K562 (cell line): ENCODE measurements at regions of chr3 and their contacts with region 1.

Region 1: GRCh38 chr3:47781685-47782445 is at the start of gene SMARCC1:
- DNase-seq: peak; percentile 98 to 100 (median 99)
- ATAC-seq: peak; percentile 90
- H3K4me3 ChIP-seq: peak within 1 kb of the TSS; percentile 69
- H3K27ac ChIP-seq: peak within 1 kb of the TSS; percentile 98
- H3K4me1 ChIP-seq: peaks cover 16 to 23% of the 10 kb centered on the region in 2 experiments
- H3K27me3 ChIP-seq: no peaks in the 10 kb centered on the region
- CTCF ChIP-seq: no peak; a peak in 1 of 6 replicates
- EP300 ChIP-seq: peak; percentile 11; the same call in 1 of the 2 replicates
- POLR2A ChIP-seq: peak; percentile 98
- RAD21 ChIP-seq: no peak
- polyA plus RNA-seq, gene SMARCC1: 20.7 to 40.5 TPM

Region 2: DNA sequence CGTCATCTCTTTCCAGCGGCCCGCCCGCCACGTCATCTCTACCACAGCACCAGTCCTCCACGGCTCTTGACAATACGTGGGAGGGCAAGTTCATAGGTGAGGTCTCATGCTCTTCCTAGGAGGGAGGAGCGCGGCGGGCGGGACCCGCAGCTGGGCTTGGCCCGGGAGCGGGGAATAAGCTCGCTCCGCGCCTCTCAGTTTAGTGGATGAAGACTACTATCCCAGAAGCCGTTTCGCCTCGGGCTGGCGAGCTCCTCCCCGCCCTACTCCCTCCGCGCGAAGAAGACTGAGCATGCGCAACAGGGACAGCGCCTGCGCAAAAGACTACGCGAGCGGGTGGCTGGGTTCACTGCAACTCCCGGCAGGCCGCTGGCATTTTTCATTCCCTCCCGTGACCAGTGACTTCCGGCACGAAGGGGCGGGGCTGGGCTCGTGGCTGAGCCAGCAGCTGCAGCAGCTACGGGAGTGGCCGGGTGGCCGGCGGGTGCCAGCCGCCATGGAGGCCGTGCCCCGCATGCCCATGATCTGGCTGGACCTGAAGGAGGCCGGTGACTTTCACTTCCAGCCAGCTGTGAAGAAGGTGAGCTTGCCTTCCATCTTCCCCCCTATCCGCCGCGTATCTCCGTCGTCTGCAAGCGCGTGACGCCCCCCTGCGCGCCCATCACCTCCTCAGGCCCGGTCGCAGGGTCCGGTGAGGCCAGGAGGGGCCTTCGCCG is 401.1 kb before region 1 on chr3 and contains the start of gene PTPN23:
- CTCF ChIA-PET with region 1: no interaction called
- POLR2A ChIA-PET with region 1: no interaction called
- in situ Hi-C with region 1: no loop called
- intact Hi-C with region 1: loop called (anchors 5 kb)
- DNase-seq: peak; percentile 97 to 100 (median 98)
- ATAC-seq: peak; percentile 87
- H3K4me3 ChIP-seq: peak within 1 kb of the TSS; percentile 88
- H3K27ac ChIP-seq: peak within 1 kb of the TSS; percentile 94
- H3K4me1 ChIP-seq: peaks cover 30 to 32% of the 10 kb centered on the region in 2 experiments
- H3K27me3 ChIP-seq: no peaks in the 10 kb centered on the region
- CTCF ChIP-seq: no peak
- EP300 ChIP-seq: no peak
- POLR2A ChIP-seq: peak; percentile 92
- RAD21 ChIP-seq: no peak
- polyA plus RNA-seq, gene PTPN23: 0.41 to 0.93 TPM

Region 3: GRCh38 chr3:47420511-47421484 is 361.1 kb before region 1 on chr3:
- CTCF ChIA-PET with region 1: no interaction called
- POLR2A ChIA-PET with region 1: no interaction called
- in situ Hi-C with region 1: loop called (anchors 5 kb)
- intact Hi-C with region 1: no loop called
- DNase-seq: peak; percentile 90 to 95 (median 91)
- ATAC-seq: peak; percentile 95
- H3K4me3 ChIP-seq: no peak overlapping the region
- H3K27ac ChIP-seq: peak overlapping the region; percentile 61
- H3K4me1 ChIP-seq: peaks cover 6 to 50% of the 10 kb centered on the region in 2 experiments; a peak in 3 of 5 replicates
- H3K27me3 ChIP-seq: no peaks in the 10 kb centered on the region
- CTCF ChIP-seq: peak; percentile 95 to 98 (median 97)
- EP300 ChIP-seq: 0 out of 2 replicates have a peak, but pooled peaks have one; percentile 33
- POLR2A ChIP-seq: 0 out of 2 replicates have a peak, but pooled peaks have one; percentile 34
- RAD21 ChIP-seq: peak; percentile 93 to 95

Region 4: DNA sequence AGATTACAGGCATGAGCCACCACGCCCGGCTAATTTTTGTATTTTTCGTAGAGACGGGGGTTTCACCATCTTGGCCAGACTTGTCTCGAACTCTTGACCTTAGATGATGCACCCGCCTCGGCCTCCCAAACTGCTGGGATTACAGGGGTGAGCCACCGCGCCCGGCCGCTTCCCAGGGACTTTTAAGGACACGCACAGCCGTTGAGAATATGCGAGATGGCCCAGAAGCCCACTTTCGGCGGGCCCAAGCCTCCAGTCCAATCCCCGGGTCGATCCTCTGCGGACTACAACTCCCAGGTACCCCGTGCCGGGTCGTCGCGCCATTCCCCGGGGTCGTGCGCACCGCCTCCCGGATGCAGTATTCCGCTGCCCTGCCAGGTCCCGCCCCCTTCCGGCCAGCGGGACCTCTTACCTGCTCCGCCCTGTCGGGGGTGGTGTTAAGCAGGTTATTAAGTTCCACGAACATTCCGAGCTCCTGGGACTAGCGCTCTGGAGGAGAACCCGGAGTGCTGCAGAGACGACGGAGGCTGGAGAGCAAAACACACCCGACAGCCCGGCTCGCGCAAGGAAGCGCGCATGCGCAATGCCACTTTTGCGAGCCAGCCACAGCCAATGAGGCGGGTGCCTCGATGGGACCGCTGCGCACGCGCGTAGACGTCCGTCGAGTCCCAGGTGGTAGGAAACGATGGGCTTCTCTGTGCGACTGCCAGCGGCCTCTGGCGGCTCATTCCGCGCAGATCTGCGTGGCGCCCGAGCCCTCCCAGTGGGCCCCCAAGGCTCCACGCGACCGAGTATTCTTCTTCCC is 268.5 kb before region 1 on chr3 and contains the start of gene ELP6:
- CTCF ChIA-PET with region 1: no interaction called
- POLR2A ChIA-PET with region 1: interaction called, 3 read pairs
- in situ Hi-C with region 1: loop called (anchors 5 kb)
- intact Hi-C with region 1: no loop called
- DNase-seq: peak; percentile 97 to 99 (median 98)
- ATAC-seq: peak; percentile 97
- H3K4me3 ChIP-seq: peak within 1 kb of the TSS; percentile 58
- H3K27ac ChIP-seq: peak within 1 kb of the TSS; percentile 95
- H3K4me1 ChIP-seq: peaks cover 30 to 37% of the 10 kb centered on the region in 2 experiments
- H3K27me3 ChIP-seq: no peaks in the 10 kb centered on the region
- CTCF ChIP-seq: peak; percentile 83 to 95 (median 92)
- EP300 ChIP-seq: peak; percentile 40
- POLR2A ChIP-seq: peak; percentile 97
- RAD21 ChIP-seq: peak; percentile 83 to 94
- polyA plus RNA-seq, gene ELP6: 86.1 to 136 TPM

Region 5: DNA sequence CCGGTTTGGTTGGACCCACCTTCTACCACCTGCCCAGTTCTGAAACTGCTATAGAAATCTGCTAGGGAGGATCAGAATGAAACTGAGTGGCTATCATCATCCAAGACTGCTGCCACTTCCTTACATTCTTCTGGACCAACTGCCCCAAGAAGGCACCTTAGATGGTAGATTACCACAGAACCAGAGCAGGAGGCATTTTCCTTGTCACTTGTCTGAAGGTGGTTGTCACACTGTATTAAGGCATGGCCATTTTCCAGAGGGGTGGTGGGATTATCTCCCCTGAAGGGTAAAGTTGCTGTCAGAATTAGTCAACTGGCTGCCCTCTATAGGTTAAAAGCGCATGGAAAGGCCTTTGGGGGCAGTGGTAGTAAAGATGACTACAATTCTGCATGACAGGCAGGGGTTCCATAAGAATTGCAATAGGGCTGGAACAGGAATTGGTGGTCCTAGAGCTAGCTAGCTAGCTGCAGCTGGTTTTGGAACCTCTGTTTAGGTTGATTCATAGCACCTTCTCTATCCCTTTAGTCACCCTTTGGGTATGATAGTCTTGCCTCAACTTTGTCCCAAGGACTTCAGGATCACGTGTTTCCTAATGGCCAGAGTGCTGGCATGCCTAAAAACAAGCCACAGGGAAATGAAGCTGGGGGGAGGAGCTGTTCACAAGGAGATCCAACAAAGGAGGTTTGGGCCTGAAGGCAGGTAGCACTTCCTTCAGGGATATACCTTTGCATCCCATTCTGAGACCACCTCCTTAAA is 198.4 kb before region 1 on chr3:
- CTCF ChIA-PET with region 1: no interaction called
- POLR2A ChIA-PET with region 1: no interaction called
- in situ Hi-C with region 1: no loop called
- intact Hi-C with region 1: loop called (anchors 5 kb)
- DNase-seq: no peak
- ATAC-seq: 0 out of 3 replicates have a peak, but pooled peaks have one; percentile 7
- H3K4me3 ChIP-seq: no peak overlapping the region
- H3K27ac ChIP-seq: no peak overlapping the region
- H3K4me1 ChIP-seq: peaks cover 0 to 9% of the 10 kb centered on the region in 2 experiments; a peak in 2 of 5 replicates
- H3K27me3 ChIP-seq: peaks cover 0 to 5% of the 10 kb centered on the region in 2 experiments; a peak in 2 of 5 replicates
- CTCF ChIP-seq: no peak
- EP300 ChIP-seq: no peak
- POLR2A ChIP-seq: peak; percentile 54
- RAD21 ChIP-seq: no peak